B cell (primary cell): ENCODE measurements at regions of chr4 and their contacts with region 1.

Region 1: DNA sequence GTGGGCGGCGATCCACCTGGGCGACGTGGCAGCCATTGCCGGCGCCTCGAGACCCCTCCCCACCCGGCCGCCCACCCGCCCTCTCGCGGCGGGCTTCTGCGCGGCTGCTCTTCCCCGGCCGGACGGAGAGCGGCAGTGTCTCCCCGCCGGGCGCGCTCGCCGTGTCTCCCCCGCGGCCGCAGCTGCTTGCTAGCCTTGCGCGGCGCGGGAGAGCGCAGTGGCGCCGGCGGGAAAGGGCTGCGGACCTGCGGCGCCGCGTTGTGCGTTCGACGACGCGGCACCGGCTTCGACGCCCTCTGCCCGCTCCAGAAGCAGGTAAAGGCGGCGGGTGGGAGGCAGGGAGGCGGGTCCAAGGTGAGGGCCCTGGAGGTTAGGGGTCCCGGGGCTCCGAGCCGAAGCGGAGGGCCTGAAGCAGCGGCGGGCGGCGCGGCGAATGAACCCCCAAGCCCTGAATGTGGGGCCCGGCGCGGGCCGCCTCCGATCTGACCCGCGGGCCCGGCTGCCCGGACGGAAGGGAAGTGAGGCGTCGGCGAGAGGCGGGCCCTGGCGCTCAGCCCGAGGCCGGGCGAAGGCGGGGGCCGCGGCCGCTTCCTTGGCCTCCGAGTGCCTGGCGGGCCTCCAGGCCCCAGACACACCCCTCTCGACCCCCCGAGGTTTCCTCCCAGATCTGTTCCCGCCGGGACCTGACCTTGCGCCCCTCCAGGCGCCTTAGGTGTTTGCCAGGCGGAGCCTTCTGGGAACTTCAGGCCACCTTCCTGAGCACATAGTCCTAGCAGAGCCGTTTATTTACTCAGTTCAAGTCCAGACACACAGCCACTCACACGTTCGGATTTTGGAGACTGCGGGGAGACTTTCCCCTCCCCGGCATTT is at the start of gene N4BP2:
- DNase-seq: peak; percentile 87
- ATAC-seq: peak; percentile 72
- H3K4me3 ChIP-seq: peak within 1 kb of the TSS; percentile 69 to 91 (median 82)
- H3K4me3 Mint-ChIP-seq: peak within 1 kb of the TSS; percentile 95
- H3K27ac ChIP-seq: peak within 1 kb of the TSS; percentile 79 to 84
- H3K27ac Mint-ChIP-seq: peak within 1 kb of the TSS; percentile 94
- H3K4me1 ChIP-seq: peaks cover 14 to 17% of the 10 kb centered on the region in 2 donors
- H3K4me1 Mint-ChIP-seq: peaks cover 27% of the 10 kb centered on the region
- H3K27me3 ChIP-seq: no peaks in the 10 kb centered on the region
- H3K27me3 Mint-ChIP-seq: no peaks in the 10 kb centered on the region
- CTCF ChIP-seq: peak; percentile 83
- total RNA-seq, gene N4BP2: 12.8 and 16.4 TPM in 2 replicates

Region 2: GRCh38 chr4:39469429-39470077 is 587.4 kb before region 1 on chr4:
- CTCF ChIA-PET with region 1: interaction called, 12 read pairs
- POLR2A ChIA-PET with region 1: no interaction called
- intact Hi-C with region 1: no loop called
- DNase-seq: peak; percentile 81
- ATAC-seq: peak; percentile 99
- H3K4me3 ChIP-seq: peak overlapping the region in 1 of 5 experiments; percentile 14
- H3K4me3 Mint-ChIP-seq: peak overlapping the region; percentile 59
- H3K27ac ChIP-seq: peak overlapping the region; percentile 36 to 68
- H3K27ac Mint-ChIP-seq: peak overlapping the region; percentile 92
- H3K4me1 ChIP-seq: peaks cover 5 to 7% of the 10 kb centered on the region in 2 donors
- H3K4me1 Mint-ChIP-seq: peaks cover 9% of the 10 kb centered on the region
- H3K27me3 ChIP-seq: no peaks in the 10 kb centered on the region
- H3K27me3 Mint-ChIP-seq: no peaks in the 10 kb centered on the region
- CTCF ChIP-seq: peak; percentile 87

Region 3: DNA sequence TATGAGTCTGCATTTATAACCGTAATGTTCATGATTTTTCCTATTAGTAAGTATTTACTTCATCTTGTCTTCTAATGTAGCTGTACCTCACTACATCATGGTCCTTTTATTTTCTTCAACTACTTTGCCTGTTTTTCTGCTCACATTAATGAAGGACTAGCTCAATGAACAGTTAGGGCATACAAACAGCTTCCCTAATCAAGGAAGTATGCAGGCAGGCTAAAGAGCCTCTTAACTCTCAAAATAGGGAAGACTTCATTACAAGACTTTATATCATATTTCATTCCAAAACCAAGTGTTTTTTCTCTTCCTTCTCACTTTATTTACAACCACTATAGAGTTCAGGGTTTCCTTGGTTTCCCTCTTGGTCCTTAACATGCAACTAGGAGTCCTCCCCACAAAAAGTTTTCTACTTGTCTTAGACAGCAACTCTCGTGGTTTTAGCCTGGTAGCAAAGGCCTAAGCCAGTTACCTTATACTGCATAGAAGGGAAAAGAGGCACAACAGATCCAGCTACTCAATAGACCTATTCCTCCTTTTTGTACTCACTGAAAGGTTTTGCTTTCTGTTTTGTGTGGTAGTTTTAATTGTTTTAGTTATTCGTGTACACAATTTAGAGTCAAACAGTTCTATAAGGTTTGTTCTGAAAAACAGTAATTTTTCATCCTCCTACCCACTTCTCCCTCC is 459.1 kb before region 1 on chr4:
- CTCF ChIA-PET with region 1: no interaction called
- POLR2A ChIA-PET with region 1: no interaction called
- intact Hi-C with region 1: no loop called
- DNase-seq: no peak
- ATAC-seq: no peak
- H3K4me3 ChIP-seq: no peak overlapping the region
- H3K4me3 Mint-ChIP-seq: no peak overlapping the region
- H3K27ac ChIP-seq: peak overlapping the region in 1 of 2 donors; percentile 45
- H3K27ac Mint-ChIP-seq: peak overlapping the region; percentile 62
- H3K4me1 ChIP-seq: peaks cover 5 to 8% of the 10 kb centered on the region in 2 donors
- H3K4me1 Mint-ChIP-seq: peaks cover 16% of the 10 kb centered on the region
- H3K27me3 ChIP-seq: no peaks in the 10 kb centered on the region
- H3K27me3 Mint-ChIP-seq: no peaks in the 10 kb centered on the region
- CTCF ChIP-seq: no peak

Region 4: DNA sequence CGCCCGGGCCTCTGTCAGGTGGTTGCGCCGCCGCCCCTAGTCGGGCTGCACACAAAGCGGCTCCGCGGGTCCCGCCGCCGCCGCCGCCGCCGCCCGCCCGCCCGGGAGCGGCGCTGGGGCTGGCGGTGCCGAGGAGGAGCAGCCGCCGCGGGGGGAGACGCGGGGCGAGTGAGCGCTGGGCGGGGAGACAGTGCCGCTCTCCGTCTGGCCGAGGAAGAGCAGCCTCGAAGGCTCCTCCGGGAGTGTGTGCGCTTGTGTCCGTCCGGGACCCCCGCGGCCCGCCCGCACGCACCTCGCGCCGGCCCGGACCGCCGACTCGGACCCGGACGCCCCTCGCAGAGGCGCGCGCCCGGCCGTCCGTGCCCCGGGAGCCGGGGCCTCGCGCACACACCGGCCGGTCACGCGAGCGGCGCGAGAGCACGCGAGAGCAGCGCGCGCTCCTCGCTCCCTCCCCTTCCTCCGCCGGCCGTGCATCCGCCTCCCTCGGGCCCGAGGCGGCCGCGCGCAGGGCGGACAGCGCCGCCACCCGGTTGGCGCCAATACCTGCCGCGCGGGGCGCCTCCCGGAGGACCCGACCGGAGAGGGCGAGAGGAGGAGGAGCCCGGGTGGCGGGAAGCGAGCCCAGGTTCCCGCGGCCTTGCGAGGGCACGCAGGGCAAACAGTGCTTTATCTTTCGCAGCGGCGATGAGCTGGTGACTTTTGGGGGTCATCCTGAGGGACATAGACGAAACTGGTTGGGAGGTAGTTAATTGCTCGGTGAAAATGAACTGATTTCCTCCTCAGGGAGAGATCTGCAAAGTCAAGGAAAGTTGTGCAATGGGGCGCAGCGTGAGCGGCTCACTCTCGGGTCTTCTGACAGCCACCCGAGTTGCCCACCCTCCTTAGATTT is 79.2 kb before region 1 on chr4 and contains the start of gene PDS5A:
- CTCF ChIA-PET with region 1: interaction called, 3 read pairs
- POLR2A ChIA-PET with region 1: no interaction called
- intact Hi-C with region 1: loop called (anchors 2 kb)
- DNase-seq: peak; percentile 95
- ATAC-seq: peak; percentile 84
- H3K4me3 ChIP-seq: peak within 1 kb of the TSS; percentile 55 to 93 (median 83)
- H3K4me3 Mint-ChIP-seq: peak within 1 kb of the TSS; percentile 91
- H3K27ac ChIP-seq: peak within 1 kb of the TSS; percentile 71 to 83
- H3K27ac Mint-ChIP-seq: peak within 1 kb of the TSS; percentile 93
- H3K4me1 ChIP-seq: peaks cover 11 to 15% of the 10 kb centered on the region in 2 donors
- H3K4me1 Mint-ChIP-seq: peaks cover 31% of the 10 kb centered on the region
- H3K27me3 ChIP-seq: no peaks in the 10 kb centered on the region
- H3K27me3 Mint-ChIP-seq: no peaks in the 10 kb centered on the region
- CTCF ChIP-seq: peak; percentile 79
- total RNA-seq, gene PDS5A: 111 and 116 TPM in 2 replicates

Region 5: GRCh38 chr4:40316782-40317635 is 260.1 kb after region 1 on chr4:
- CTCF ChIA-PET with region 1: interaction called, 35 read pairs
- POLR2A ChIA-PET with region 1: no interaction called
- intact Hi-C with region 1: loop called (anchors 2 kb)
- DNase-seq: peak; percentile 87
- ATAC-seq: peak; percentile 84
- H3K4me3 ChIP-seq: peak overlapping the region; percentile 25 to 62 (median 58)
- H3K4me3 Mint-ChIP-seq: peak overlapping the region; percentile 83
- H3K27ac ChIP-seq: peak overlapping the region; percentile 57 to 78
- H3K27ac Mint-ChIP-seq: peak overlapping the region; percentile 85
- H3K4me1 ChIP-seq: peaks cover 18 to 20% of the 10 kb centered on the region in 2 donors
- H3K4me1 Mint-ChIP-seq: peaks cover 32% of the 10 kb centered on the region
- H3K27me3 ChIP-seq: no peaks in the 10 kb centered on the region
- H3K27me3 Mint-ChIP-seq: no peaks in the 10 kb centered on the region
- CTCF ChIP-seq: peak; percentile 90

Region 6: GRCh38 chr4:40629401-40630334 is 572.7 kb after region 1 on chr4 and contains the start of gene RBM47:
- CTCF ChIA-PET with region 1: no interaction called
- POLR2A ChIA-PET with region 1: no interaction called
- intact Hi-C with region 1: loop called (anchors 10 kb)
- DNase-seq: peak; percentile 67
- ATAC-seq: peak; percentile 55
- H3K4me3 ChIP-seq: peak within 1 kb of the TSS; percentile 59 to 88 (median 70)
- H3K4me3 Mint-ChIP-seq: peak within 1 kb of the TSS; percentile 96
- H3K27ac ChIP-seq: peak within 1 kb of the TSS; percentile 61 to 72
- H3K27ac Mint-ChIP-seq: peak within 1 kb of the TSS; percentile 86
- H3K4me1 ChIP-seq: peaks cover 14 to 15% of the 10 kb centered on the region in 2 donors
- H3K4me1 Mint-ChIP-seq: peaks cover 20% of the 10 kb centered on the region
- H3K27me3 ChIP-seq: no peaks in the 10 kb centered on the region
- H3K27me3 Mint-ChIP-seq: peaks cover 4% of the 10 kb centered on the region
- CTCF ChIP-seq: no peak
- total RNA-seq, gene RBM47: 12.6 and 12.9 TPM in 2 replicates